Heart right ventricle (tissue), 16 donors: ENCODE measurements at regions of chr7 and their contacts with region 1.

Region 1: GRCh38 chr7:16431646-16432424 is 10.5 kb upstream of the CRPPA start:
- DNase-seq: peak in 1 of 2 donors; percentile 14
- ATAC-seq: peak in 3 of 8 donors; percentile 44 to 53 (median 51)
- H3K4me3 ChIP-seq: no peak overlapping the region
- H3K27ac ChIP-seq: no peak overlapping the region
- H3K4me1 ChIP-seq: no peaks in the 10 kb centered on the region
- H3K27me3 ChIP-seq: no peaks in the 10 kb centered on the region
- CTCF ChIP-seq: peak; percentile 23 to 67 (median 55)

Region 2: GRCh38 chr7:16559497-16560179 is 127.8 kb after region 1 on chr7:
- intact Hi-C with region 1: loop called in 7 of 10 experiments (anchors 2 to 10 kb)
- DNase-seq: no peak
- ATAC-seq: peak in 1 of 8 donors; percentile 73
- H3K4me3 ChIP-seq: no peak overlapping the region
- H3K27ac ChIP-seq: no peak overlapping the region
- H3K4me1 ChIP-seq: peaks cover 0 to 5% (median 0%) of the 10 kb centered on the region in 9 donors
- H3K27me3 ChIP-seq: no peaks in the 10 kb centered on the region
- CTCF ChIP-seq: no peak